Head of caudate nucleus (tissue), 42 donors: ENCODE measurements at regions of chr4 and their contacts with region 1.

Region 1: GRCh38 chr4:156968479-156968984 is 3.1 kb downstream of the PDGFC start:
- DNase-seq: peak in 40 of 42 donors; percentile 17 to 88 (median 66)

Region 2: GRCh38 chr4:156594624-156595023 is 373.9 kb before region 1 on chr4:
- intact Hi-C with region 1: loop called (anchors 10 kb)
- DNase-seq: peak in 31 of 42 donors; percentile 2 to 51 (median 19)

Region 3: GRCh38 chr4:156771171-156771837 is 197.2 kb before region 1 on chr4:
- intact Hi-C with region 1: loop called (anchors 10 kb)
- DNase-seq: peak in 14 of 42 donors; percentile 4 to 57 (median 24)